GM13977 (cell line): ENCODE measurements at regions of chr14 and their contacts with region 1.

Region 1: DNA sequence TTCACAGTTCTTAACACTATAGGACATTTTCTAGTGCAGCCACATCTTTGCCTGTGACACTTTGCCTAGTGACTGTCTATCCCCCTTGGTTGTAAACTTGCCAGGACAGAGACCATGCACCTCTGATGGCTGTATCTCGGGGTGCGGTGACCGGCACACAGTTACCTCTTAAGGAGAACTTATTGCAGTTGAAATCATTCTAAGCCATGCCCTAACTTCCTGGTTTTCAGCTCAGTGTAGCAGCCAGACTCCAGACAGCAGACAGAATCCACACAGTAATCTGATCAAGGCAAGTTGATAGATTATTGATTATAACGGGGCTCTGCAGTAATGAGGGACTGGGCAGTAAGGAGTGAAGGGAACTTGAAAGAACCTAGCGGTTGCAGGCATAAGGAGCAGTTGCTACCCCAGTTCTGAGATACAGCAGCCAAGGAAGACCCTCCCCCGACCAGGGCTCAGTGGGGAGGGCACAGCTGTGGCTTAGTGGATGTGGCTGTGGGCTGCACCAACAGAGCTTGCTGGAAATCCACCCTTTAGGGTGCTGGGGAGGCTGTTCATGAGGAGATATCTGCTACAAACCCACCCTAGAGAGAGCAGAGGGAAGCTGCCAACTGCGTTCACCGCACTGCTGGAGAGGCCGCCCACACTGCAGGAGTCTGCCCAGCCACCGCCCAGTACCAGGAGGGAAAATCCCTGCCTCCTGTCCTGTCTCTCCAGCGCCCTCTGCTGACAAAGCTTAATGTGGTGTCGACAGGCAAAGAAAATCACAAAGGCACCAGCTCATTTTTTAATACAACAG is 58.2 kb upstream of the BEGAIN start:
- DNase-seq: peak; percentile 89
- CTCF ChIP-seq: peak; percentile 84

Region 2: GRCh38 chr14:100384819-100385813 is 260.3 kb before region 1 on chr14:
- in situ Hi-C with region 1: loop called (anchors 5 kb)
- DNase-seq: no peak
- CTCF ChIP-seq: peak; percentile 20

Region 3: DNA sequence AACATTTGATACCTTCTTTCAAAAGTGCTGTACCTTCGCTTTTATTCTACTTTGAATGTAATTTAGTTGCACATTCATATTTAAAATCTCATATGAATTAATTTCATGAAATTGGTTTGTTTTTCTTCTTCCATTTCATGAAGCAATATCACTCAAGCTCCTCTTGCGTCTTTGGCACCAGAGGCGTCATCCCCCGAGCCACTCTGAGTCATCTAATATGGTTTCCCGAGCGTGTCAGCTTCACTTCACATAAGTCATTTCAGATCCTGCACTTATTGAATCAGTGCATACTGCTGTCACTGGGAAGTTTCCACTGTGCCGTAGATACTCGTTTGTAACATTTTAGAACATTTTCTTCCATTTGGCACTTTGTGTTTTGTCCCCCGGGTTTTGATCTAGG is 216.7 kb before region 1 on chr14:
- in situ Hi-C with region 1: no loop called
- DNase-seq: no peak
- CTCF ChIP-seq: no peak